ENCODE measurements at regions of chr2 and their contacts with region 1.

Region 1: GRCh38 chr2:207724113-207724512 is 12.7 kb downstream of the CCNYL1 start:
- DNase-seq: no peak
- H3K4me3 Mint-ChIP-seq: no peak overlapping the region
- H3K27ac Mint-ChIP-seq: no peak overlapping the region
- H3K4me1 Mint-ChIP-seq: peaks cover 41% of the 10 kb centered on the region
- H3K27me3 Mint-ChIP-seq: no peaks in the 10 kb centered on the region
- CTCF ChIP-seq: no peak

Region 2: GRCh38 chr2:207683879-207684627 is 40.1 kb before region 1 on chr2:
- CTCF ChIA-PET with region 1: interaction called, 4 read pairs
- intact Hi-C with region 1: loop called (anchors 5 kb)
- DNase-seq: peak; percentile 24
- H3K4me3 Mint-ChIP-seq: peak overlapping the region; percentile 42
- H3K27ac Mint-ChIP-seq: peak overlapping the region; percentile 84
- H3K4me1 Mint-ChIP-seq: peaks cover 19% of the 10 kb centered on the region
- H3K27me3 Mint-ChIP-seq: peaks cover 7% of the 10 kb centered on the region
- CTCF ChIP-seq: no peak

Region 3: GRCh38 chr2:207879536-207879935 is 155.4 kb after region 1 on chr2:
- CTCF ChIA-PET with region 1: no interaction called
- intact Hi-C with region 1: no loop called
- DNase-seq: no peak
- H3K4me3 Mint-ChIP-seq: no peak overlapping the region
- H3K27ac Mint-ChIP-seq: no peak overlapping the region
- H3K4me1 Mint-ChIP-seq: peaks cover 21% of the 10 kb centered on the region
- H3K27me3 Mint-ChIP-seq: no peaks in the 10 kb centered on the region
- CTCF ChIP-seq: no peak

Region 4: GRCh38 chr2:208134928-208135586 is 410.9 kb after region 1 on chr2:
- CTCF ChIA-PET with region 1: no interaction called
- intact Hi-C with region 1: no loop called
- DNase-seq: no peak
- H3K4me3 Mint-ChIP-seq: no peak overlapping the region
- H3K27ac Mint-ChIP-seq: no peak overlapping the region
- H3K4me1 Mint-ChIP-seq: peaks cover 8% of the 10 kb centered on the region
- H3K27me3 Mint-ChIP-seq: no peaks in the 10 kb centered on the region
- CTCF ChIP-seq: no peak